ENCODE measurements at regions of chrX and their contacts with region 1.

Region 1: DNA sequence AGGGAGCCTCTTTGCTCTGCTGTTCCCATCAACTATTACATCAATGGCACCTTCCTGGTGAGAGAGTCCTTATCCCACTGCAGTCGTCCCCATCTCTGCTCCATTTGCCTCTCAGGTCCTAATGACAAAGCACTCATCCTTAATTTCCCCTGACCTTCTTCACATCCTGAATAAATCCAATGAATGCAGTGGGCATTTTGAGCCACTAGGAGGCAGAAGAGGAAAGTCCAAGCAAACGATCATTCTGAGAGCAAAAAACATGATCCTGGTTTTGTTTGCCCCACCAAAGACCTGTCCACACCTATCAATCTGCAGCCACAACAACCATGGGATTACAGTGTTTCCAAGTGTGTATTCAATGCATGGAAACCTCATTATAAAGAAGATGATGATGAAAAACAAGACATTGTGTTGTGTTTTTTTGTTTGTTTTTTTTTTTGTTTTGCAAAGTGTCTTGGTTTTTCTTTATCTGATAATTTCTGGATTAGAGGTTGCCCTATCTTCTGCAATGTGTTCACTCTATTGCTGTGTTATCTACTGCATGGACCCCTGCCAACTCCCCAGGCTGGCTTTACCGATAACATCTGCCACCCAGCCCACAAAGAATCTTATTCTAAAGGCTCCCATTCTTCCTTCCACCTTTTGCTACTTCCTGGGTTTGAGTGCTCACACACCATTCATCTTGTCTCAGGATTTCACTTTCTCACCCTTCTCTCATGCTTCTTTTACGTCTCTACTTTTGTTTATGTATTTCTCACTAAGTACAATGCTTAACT is 207.2 kb downstream of the NLGN4X start:
- DNase-seq: peak; percentile 26 to 42
- H3K4me3 ChIP-seq: no peak overlapping the region
- H3K4me3 Mint-ChIP-seq: no peak overlapping the region
- H3K27ac Mint-ChIP-seq: no peak overlapping the region
- H3K4me1 ChIP-seq: no peaks in the 10 kb centered on the region
- H3K4me1 Mint-ChIP-seq: no peaks in the 10 kb centered on the region
- H3K27me3 ChIP-seq: no peaks in the 10 kb centered on the region
- H3K27me3 Mint-ChIP-seq: no peaks in the 10 kb centered on the region
- CTCF ChIP-seq: peak; percentile 26 to 54

Region 2: GRCh38 chrX:6363188-6363587 is 341.7 kb after region 1 on chrX:
- CTCF ChIA-PET with region 1: no interaction called
- POLR2A ChIA-PET with region 1: no interaction called
- intact Hi-C with region 1: loop called (anchors 1 kb)
- DNase-seq: no peak
- H3K4me3 ChIP-seq: no peak overlapping the region
- H3K4me3 Mint-ChIP-seq: no peak overlapping the region
- H3K27ac Mint-ChIP-seq: no peak overlapping the region
- H3K4me1 ChIP-seq: no peaks in the 10 kb centered on the region
- H3K4me1 Mint-ChIP-seq: peaks cover 3% of the 10 kb centered on the region
- H3K27me3 ChIP-seq: no peaks in the 10 kb centered on the region
- H3K27me3 Mint-ChIP-seq: no peaks in the 10 kb centered on the region
- CTCF ChIP-seq: no peak

Region 3: DNA sequence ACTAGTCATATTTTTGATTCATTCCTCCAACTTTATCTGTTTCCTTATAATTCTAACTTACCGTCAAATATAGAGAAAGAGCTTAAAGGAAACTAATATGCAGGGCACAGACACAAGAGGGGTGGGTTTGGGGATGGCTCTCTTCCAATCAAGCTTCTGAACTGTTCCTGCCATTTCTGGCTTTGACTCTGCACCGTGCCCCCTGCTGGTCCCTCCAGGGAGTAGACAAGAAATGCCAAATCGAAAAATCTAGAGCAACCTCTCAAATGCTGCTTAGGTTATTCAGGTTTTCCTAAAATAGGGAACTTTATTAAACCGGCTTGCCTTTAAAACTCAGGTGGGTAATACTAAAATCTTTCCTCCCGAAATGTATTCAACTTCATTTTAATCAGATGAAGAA is 553.3 kb after region 1 on chrX:
- CTCF ChIA-PET with region 1: no interaction called
- POLR2A ChIA-PET with region 1: no interaction called
- intact Hi-C with region 1: loop called (anchors 5 kb)
- DNase-seq: peak in 1 of 2 experiments; percentile 2
- H3K4me3 ChIP-seq: no peak overlapping the region
- H3K4me3 Mint-ChIP-seq: no peak overlapping the region
- H3K27ac Mint-ChIP-seq: no peak overlapping the region
- H3K4me1 ChIP-seq: no peaks in the 10 kb centered on the region
- H3K4me1 Mint-ChIP-seq: no peaks in the 10 kb centered on the region
- H3K27me3 ChIP-seq: no peaks in the 10 kb centered on the region
- H3K27me3 Mint-ChIP-seq: no peaks in the 10 kb centered on the region
- CTCF ChIP-seq: peak; percentile 18 to 24

Measured in Caco-2 (cell line).